Activated CD4-positive, alpha-beta memory T cell treated with anti-CD3 and anti-CD28 coated beads for 36 hours (primary cell): ENCODE measurements at regions of chr13 and their contacts with region 1.

Region 1: DNA sequence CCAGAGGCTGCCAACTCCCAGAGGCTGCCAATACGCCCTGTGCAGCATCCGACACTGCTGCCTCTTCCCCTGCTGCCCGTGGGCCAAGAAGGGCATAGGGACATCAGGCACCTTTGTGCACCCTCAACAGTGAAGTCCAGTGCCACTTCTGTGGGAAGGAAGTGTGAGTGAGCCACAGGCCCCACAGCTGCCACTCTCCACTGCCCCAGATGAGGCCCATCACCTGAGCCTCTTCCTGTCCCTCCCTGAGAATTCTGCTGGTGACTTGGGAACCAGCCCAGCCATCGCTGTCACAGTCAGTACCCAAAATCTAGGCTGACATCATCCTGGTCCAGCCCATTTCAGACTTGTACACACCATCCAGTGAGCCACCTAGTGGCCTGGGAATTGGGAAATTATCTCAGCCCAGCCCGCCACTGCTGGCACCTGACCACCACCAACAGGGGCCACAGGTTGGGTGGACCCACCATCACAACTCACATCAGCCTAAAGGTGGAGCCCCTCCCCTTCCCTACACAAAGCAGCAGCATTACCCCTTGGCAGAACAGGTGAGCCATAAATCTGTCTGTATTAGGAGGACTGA is 733.9 kb upstream of the KLHL1 start:
- DNase-seq: no peak
- H3K4me3 Mint-ChIP-seq: no peak overlapping the region
- H3K27ac Mint-ChIP-seq: no peak overlapping the region
- H3K4me1 Mint-ChIP-seq: no peaks in the 10 kb centered on the region
- H3K27me3 Mint-ChIP-seq: no peaks in the 10 kb centered on the region

Region 2: DNA sequence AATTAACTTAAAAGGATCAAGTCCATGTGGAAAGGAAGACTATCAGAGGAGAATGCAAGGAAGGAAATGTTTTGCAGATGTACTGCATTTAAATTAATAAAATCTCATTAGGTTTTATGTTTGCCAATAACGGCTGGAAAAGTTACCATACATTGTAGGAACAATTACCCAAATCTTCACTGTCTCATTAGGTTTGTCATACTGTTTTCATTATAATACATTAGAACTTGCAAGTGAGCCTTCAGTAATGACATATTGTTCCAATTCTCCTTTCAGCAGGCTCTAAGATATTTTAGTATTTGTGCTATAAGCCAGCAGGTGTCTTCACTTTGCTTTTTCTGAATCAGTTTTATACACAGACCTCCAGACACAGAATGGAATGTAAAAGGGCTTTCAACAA is 72.3 kb before region 1 on chr13:
- CTCF ChIA-PET with region 1: no interaction called
- POLR2A ChIA-PET with region 1: no interaction called
- intact Hi-C with region 1: loop called (anchors 2 kb)
- DNase-seq: no peak
- H3K4me3 Mint-ChIP-seq: no peak overlapping the region
- H3K27ac Mint-ChIP-seq: no peak overlapping the region
- H3K4me1 Mint-ChIP-seq: no peaks in the 10 kb centered on the region
- H3K27me3 Mint-ChIP-seq: no peaks in the 10 kb centered on the region